HAP-1 (cell line): ENCODE measurements at regions of chr10 and their contacts with region 1.

Region 1: DNA sequence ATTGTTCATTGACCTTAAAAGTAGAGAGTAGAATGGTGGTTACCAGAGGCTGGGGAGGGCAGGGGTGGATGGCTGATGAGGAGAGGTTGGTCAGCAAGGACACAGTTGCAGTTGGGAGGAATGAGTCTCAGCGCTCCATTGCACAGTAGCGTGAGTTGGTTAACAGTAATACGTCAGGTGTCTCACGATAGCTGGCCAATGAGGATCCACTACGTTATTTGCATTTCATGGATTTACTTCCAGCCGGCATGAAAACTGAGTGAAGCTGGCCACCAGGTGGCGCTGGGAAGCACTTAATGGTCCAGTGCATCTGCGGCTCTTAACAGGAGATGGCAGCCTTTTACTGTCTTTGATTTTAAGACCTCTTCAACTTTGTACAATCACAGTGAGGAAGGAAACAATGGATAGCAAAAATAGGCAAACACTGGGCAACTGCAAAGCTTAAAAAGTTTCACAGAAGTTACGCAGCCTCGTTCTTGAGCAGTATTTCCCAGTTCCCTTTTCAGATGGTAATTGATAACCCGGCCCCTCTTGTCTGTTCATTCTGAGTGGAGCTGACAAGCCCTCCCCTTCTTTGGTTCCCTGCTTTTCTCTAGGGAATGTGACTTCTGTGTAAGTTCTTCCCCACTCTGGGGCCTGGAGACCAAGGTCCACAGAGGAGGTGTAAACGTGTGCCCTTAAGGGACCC is 23.7 kb downstream of the AKR1E2 start:
- DNase-seq: peak; percentile 89 to 93
- H3K4me3 ChIP-seq: no peak overlapping the region
- H3K4me1 ChIP-seq: peaks cover 7% of the 10 kb centered on the region; the same call in 1 of the 2 replicates
- H3K27me3 ChIP-seq: no peaks in the 10 kb centered on the region

Region 2: DNA sequence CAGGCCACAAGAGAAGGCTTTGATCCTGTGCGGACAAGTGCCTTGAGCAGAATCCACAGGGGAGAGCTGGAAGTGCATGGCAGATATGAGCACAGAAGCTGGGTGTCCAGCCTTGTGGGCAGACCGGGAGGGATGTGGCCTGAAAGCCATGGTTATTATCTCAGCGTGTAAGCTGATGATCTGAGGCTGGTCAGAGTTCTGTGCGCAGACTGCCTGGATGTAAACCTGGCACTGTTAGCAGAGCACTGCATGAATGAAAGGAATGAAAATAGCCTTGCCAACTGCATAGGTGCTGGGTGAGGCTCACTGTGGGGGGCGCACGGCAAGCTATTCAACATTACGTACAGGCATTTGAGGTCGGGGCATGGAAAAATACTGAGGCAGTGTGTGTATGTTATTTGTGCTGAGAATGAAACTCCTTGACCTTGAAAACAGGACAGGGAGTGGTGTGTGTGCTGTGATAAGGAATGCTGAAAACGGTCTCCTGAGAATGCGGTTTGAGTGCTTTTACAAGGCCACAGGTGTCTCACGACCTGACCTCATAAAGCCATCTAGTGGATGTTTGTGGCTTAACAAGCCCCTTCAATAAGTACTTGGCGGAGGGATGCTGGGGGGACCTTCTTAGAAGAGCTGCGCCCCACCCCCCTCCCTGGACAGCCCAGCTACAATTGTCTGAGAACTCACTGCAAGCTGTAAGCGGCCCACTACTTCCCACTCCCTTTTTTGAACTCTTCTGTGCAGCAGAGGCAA is 132.2 kb after region 1 on chr10:
- in situ Hi-C with region 1: loop called (anchors 10 kb)
- DNase-seq: peak; percentile 65 to 70
- H3K4me3 ChIP-seq: no peak overlapping the region
- H3K4me1 ChIP-seq: peaks cover 5% of the 10 kb centered on the region
- H3K27me3 ChIP-seq: no peaks in the 10 kb centered on the region

Region 3: GRCh38 chr10:5094265-5095205 is 244.8 kb after region 1 on chr10 and contains the start of gene AKR1C3:
- in situ Hi-C with region 1: loop called (anchors 10 kb)
- DNase-seq: peak in 1 of 2 experiments; percentile 50
- H3K4me3 ChIP-seq: peak within 1 kb of the TSS; percentile 11
- H3K4me1 ChIP-seq: no peaks in the 10 kb centered on the region
- H3K27me3 ChIP-seq: no peaks in the 10 kb centered on the region

Region 4: DNA sequence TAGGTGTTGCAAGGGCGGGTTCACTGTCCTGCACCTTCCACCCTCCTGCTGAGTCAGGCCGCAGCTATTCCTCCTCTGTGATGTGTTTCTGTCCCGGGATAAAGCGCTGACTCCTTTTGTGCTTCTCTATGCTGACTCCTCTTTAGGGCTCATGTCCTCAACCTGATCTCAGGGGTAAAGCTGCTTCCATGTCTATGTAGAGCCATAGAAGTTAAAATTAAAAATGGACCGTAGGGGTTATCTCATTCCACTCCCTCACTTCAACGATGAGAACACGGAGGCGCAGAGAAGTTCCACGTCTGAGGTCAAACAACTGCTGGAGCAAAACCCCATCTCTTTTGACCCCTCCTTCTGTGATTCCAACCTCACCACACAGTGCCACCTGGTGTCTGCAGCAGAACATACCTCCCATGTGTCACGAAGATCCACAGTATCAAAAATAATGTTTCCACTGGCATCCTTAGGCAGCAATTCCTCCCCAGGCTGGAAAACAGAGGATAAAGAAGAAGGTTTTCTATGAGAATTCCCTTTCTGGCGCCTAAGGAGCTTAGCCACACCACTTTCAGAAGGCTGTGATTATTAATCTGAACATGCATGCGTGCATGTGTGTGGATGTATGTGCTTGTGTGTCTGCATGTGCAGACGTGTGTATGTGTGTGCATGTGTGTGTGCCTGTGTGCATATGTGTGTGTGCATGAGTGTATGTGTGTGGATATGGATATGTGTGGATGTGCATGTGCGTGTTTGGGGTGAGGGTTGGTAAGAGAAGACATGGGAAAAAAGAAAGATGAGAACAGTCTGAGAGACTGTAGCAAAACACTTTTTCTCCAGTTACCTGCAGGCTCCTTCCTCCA is 433.8 kb after region 1 on chr10:
- in situ Hi-C with region 1: loop called (anchors 10 kb)
- DNase-seq: peak; percentile 51 to 73
- H3K4me3 ChIP-seq: no peak overlapping the region
- H3K4me1 ChIP-seq: no peaks in the 10 kb centered on the region
- H3K27me3 ChIP-seq: no peaks in the 10 kb centered on the region

Region 5: DNA sequence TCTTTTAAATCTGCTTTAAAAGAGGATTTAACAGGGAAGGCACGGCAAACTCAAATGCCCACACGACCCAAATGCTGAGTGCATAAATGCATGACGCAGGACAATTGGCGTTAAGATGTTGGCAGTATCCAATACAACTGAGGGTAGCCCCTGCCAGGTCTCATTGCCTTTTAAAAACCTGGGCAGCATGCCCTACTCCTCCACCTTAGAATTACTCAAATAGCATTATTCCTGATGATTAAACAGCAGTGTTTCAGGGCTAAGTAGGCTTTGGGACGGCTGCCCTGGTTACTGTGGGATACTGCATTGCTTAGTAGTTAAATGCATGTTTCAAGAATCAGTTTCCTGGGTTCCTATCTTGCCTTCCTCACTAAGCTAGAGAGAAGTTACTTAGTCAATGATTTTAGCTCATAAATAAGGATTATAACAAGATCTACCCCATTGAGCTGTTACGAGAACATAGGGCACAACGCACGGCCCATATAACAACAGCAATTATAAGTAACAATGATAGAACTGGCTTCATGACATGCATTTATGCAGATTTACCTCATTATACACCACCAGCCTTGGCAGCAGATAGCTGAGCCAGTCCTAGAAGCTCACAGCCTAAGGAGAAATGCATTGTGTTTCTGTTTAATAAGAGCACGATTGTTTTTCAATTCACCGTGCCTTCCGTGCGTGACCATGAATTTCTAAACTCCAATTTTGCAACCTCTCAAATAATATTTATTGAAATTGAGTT is 547.0 kb after region 1 on chr10:
- in situ Hi-C with region 1: loop called (anchors 25 kb)
- DNase-seq: no peak
- H3K4me3 ChIP-seq: no peak overlapping the region
- H3K4me1 ChIP-seq: no peaks in the 10 kb centered on the region
- H3K27me3 ChIP-seq: no peaks in the 10 kb centered on the region